SK-N-SH (cell line): ENCODE measurements at regions of chr1 and their contacts with region 1.

Region 1: GRCh38 chr1:93629099-93630059 is 52.3 kb downstream of the BCAR3 start:
- DNase-seq: peak; percentile 53
- H3K4me3 ChIP-seq: no peak overlapping the region; a peak in 1 of 4 replicates
- H3K27ac ChIP-seq: peak overlapping the region; percentile 53 to 98
- H3K4me1 ChIP-seq: peaks cover 27 to 41% of the 10 kb centered on the region in 2 experiments
- H3K27me3 ChIP-seq: no peaks in the 10 kb centered on the region
- CTCF ChIP-seq: peak; percentile 95
- EP300 ChIP-seq: no peak; a peak in 1 of 4 replicates
- RAD21 ChIP-seq: peak; percentile 99

Region 2: GRCh38 chr1:93437976-93438605 is 191.3 kb before region 1 on chr1:
- CTCF ChIA-PET with region 1: interaction called, 12 read pairs
- POLR2A ChIA-PET with region 1: no interaction called
- DNase-seq: peak; percentile 63
- H3K4me3 ChIP-seq: no peak overlapping the region; a peak in 1 of 4 replicates
- H3K27ac ChIP-seq: no peak overlapping the region
- H3K4me1 ChIP-seq: peaks cover 0 to 6% of the 10 kb centered on the region in 2 experiments; a peak in 2 of 4 replicates
- H3K27me3 ChIP-seq: no peaks in the 10 kb centered on the region
- CTCF ChIP-seq: peak; percentile 82
- EP300 ChIP-seq: no peak
- RAD21 ChIP-seq: peak; percentile 88

Region 3: DNA sequence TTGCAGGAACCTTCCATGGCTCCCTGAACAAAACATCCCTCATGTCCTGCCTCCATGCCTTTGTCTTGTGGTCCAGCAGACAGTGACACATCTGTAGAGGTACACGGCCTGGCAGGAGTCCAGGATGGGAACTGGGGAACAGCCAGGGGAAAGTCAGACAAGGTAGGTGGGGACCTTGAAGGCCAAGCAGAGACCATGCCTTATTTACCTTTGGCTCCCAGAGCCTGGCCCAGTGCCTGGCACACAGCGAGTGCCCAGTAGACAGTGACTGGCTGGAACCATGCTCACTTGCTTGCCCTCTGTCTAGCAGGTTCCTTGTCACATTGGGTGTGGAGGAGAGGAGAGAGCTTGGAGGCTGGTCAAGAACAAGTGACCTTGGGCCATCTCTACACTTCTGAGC is 28.7 kb before region 1 on chr1:
- CTCF ChIA-PET with region 1: interaction called, 12 read pairs
- POLR2A ChIA-PET with region 1: no interaction called
- DNase-seq: no peak
- H3K4me3 ChIP-seq: no peak overlapping the region
- H3K27ac ChIP-seq: no peak overlapping the region
- H3K4me1 ChIP-seq: peaks cover 35 to 64% of the 10 kb centered on the region in 2 experiments
- H3K27me3 ChIP-seq: no peaks in the 10 kb centered on the region
- CTCF ChIP-seq: no peak
- EP300 ChIP-seq: no peak
- RAD21 ChIP-seq: no peak

Region 4: DNA sequence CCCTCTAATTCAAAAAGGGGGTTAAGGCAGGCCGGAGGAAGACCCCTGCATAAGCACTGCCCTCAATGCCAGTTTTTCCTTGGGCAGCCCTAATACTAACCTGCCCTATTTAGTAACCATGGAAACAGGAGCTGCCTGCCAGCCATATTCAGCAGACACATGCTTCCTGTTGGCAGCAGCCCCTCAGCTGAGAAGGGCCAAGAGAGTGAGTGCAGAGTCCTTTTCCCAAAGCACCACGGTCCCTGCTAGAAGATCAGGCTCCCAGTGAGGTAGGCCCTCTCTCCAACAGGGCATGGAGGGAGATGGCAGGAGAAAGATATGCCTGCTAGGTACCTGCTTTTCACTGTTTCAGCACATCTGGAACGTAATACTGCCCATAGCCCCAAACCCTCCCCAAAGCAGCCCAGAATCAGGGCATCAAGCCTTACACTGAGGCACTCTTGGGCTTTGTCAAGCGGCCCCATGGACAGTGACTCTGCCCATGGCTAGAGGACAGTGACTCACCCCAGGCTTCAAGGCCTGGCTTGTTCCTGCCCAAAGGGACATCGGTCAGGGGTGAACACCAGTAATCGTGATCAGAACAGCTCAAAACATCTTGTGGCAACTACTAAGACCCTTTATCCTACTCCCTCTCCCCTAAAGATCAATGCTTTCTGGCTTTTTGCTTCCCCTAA is 12.2 kb before region 1 on chr1:
- CTCF ChIA-PET with region 1: interaction called, 36 read pairs
- POLR2A ChIA-PET with region 1: interaction called, 3 read pairs
- DNase-seq: peak; percentile 68
- H3K4me3 ChIP-seq: 0 out of 4 replicates have a peak overlapping the region, but pooled peaks of 1 of the 2 experiments have one; percentile 4
- H3K27ac ChIP-seq: peak overlapping the region; percentile 97 to 98
- H3K4me1 ChIP-seq: peaks cover 80 to 84% of the 10 kb centered on the region in 2 experiments
- H3K27me3 ChIP-seq: no peaks in the 10 kb centered on the region
- CTCF ChIP-seq: no peak
- EP300 ChIP-seq: no peak
- RAD21 ChIP-seq: no peak; the same call in 1 of the 2 replicates

Region 5: DNA sequence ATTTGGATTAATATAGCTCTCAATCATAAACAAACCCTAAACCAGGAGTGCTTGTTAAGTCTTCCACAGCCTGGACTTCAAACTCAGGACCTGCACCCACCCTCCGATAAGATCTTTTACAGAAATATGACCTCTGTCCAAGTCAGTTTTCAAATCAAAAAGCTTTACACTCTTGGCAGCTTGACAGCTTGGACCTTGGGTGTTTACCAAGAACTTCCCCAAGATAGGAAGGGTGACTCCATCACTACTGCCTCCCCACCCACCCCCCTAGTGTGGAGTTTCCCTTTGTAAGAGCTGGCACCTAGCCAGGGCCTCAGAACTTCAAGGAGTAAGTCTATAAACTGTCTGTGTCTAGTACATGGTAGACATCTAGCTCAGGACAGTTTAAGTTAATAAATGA is 42.7 kb after region 1 on chr1:
- CTCF ChIA-PET with region 1: interaction called, 61 read pairs
- POLR2A ChIA-PET with region 1: no interaction called
- DNase-seq: no peak
- H3K4me3 ChIP-seq: no peak overlapping the region
- H3K27ac ChIP-seq: peak overlapping the region; percentile 73 to 81
- H3K4me1 ChIP-seq: peaks cover 62 to 74% of the 10 kb centered on the region in 2 experiments
- H3K27me3 ChIP-seq: no peaks in the 10 kb centered on the region
- CTCF ChIP-seq: no peak
- EP300 ChIP-seq: peak; percentile 17 to 80; a peak in 1 of 4 replicates
- RAD21 ChIP-seq: no peak

Region 6: GRCh38 chr1:93701619-93702018 is 72.2 kb after region 1 on chr1:
- CTCF ChIA-PET with region 1: interaction called, 11 read pairs
- POLR2A ChIA-PET with region 1: no interaction called
- DNase-seq: peak; percentile 33
- H3K4me3 ChIP-seq: no peak overlapping the region
- H3K27ac ChIP-seq: peak overlapping the region; percentile 95
- H3K4me1 ChIP-seq: peaks cover 24 to 39% of the 10 kb centered on the region in 2 experiments
- H3K27me3 ChIP-seq: no peaks in the 10 kb centered on the region
- CTCF ChIP-seq: no peak
- EP300 ChIP-seq: peak in 1 of 2 experiments; percentile 99; a peak in 2 of 4 replicates
- RAD21 ChIP-seq: no peak

Region 7: GRCh38 chr1:93846211-93846991 is 217.0 kb after region 1 on chr1:
- CTCF ChIA-PET with region 1: interaction called, 231 read pairs
- POLR2A ChIA-PET with region 1: interaction called, 3 read pairs
- DNase-seq: peak; percentile 90
- H3K4me3 ChIP-seq: peak overlapping the region; percentile 85 to 94
- H3K27ac ChIP-seq: peak overlapping the region; percentile 88 to 96
- H3K4me1 ChIP-seq: peaks cover 23% of the 10 kb centered on the region in 2 experiments; a peak in 3 of 4 replicates
- H3K27me3 ChIP-seq: no peaks in the 10 kb centered on the region
- CTCF ChIP-seq: peak; percentile 39
- EP300 ChIP-seq: no peak
- RAD21 ChIP-seq: no peak; the same call in 1 of the 2 replicates